ENCODE measurements at regions of chr1 and their contacts with region 1.

Region 1: GRCh38 chr1:27662707-27663393 is 9.1 kb downstream of the IFI6 start:
- DNase-seq: peak; percentile 93
- H3K4me3 Mint-ChIP-seq: peak overlapping the region; percentile 70
- H3K27ac Mint-ChIP-seq: peak overlapping the region; percentile 99
- H3K4me1 Mint-ChIP-seq: peaks cover 51% of the 10 kb centered on the region
- H3K27me3 Mint-ChIP-seq: no peaks in the 10 kb centered on the region

Region 2: GRCh38 chr1:27525296-27526272 is 137.3 kb before region 1 on chr1:
- CTCF ChIA-PET with region 1: interaction called, 24 read pairs
- DNase-seq: peak; percentile 82
- H3K4me3 Mint-ChIP-seq: peak overlapping the region; percentile 74
- H3K27ac Mint-ChIP-seq: peak overlapping the region; percentile 73
- H3K4me1 Mint-ChIP-seq: peaks cover 79% of the 10 kb centered on the region
- H3K27me3 Mint-ChIP-seq: no peaks in the 10 kb centered on the region

Region 3: GRCh38 chr1:27609618-27610240 is 53.1 kb before region 1 on chr1:
- CTCF ChIA-PET with region 1: interaction called, 221 read pairs
- DNase-seq: no peak
- H3K4me3 Mint-ChIP-seq: no peak overlapping the region
- H3K27ac Mint-ChIP-seq: no peak overlapping the region
- H3K4me1 Mint-ChIP-seq: peaks cover 35% of the 10 kb centered on the region
- H3K27me3 Mint-ChIP-seq: peaks cover 9% of the 10 kb centered on the region

Region 4: DNA sequence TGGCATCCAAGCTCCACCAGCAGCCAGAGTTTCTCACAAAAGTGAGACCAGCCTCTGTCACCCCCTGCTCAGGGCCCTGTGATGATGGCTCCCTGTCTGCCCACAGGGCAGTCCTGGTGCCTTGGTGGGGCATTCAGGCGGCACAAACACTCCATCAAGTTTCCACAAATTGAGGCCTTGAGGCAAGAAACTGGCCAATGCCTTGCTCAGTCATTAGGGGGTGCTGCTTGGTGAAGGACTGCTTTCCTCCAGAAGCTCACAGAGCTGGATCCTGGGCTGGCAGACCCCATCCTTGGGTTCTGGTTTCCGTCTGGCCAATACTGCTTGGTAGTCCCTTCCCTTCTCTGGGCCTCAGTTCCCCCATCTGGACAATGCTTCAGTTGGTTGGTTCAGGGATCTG is 46.4 kb before region 1 on chr1:
- CTCF ChIA-PET with region 1: interaction called, 221 read pairs
- DNase-seq: no peak
- H3K4me3 Mint-ChIP-seq: no peak overlapping the region
- H3K27ac Mint-ChIP-seq: no peak overlapping the region
- H3K4me1 Mint-ChIP-seq: peaks cover 50% of the 10 kb centered on the region
- H3K27me3 Mint-ChIP-seq: peaks cover 6% of the 10 kb centered on the region

Region 5: GRCh38 chr1:27638047-27638734 is 24.7 kb before region 1 on chr1:
- CTCF ChIA-PET with region 1: interaction called, 27 read pairs
- DNase-seq: no peak
- H3K4me3 Mint-ChIP-seq: no peak overlapping the region
- H3K27ac Mint-ChIP-seq: no peak overlapping the region
- H3K4me1 Mint-ChIP-seq: peaks cover 39% of the 10 kb centered on the region
- H3K27me3 Mint-ChIP-seq: peaks cover 21% of the 10 kb centered on the region

Region 6: GRCh38 chr1:27643701-27644625 is 18.9 kb before region 1 on chr1:
- CTCF ChIA-PET with region 1: interaction called, 27 read pairs
- DNase-seq: peak; percentile 75
- H3K4me3 Mint-ChIP-seq: no peak overlapping the region
- H3K27ac Mint-ChIP-seq: no peak overlapping the region
- H3K4me1 Mint-ChIP-seq: peaks cover 17% of the 10 kb centered on the region
- H3K27me3 Mint-ChIP-seq: peaks cover 16% of the 10 kb centered on the region